Posterior vena cava (tissue), 2 donors: ENCODE measurements at regions of chr3 and their contacts with region 1.

Region 1: DNA sequence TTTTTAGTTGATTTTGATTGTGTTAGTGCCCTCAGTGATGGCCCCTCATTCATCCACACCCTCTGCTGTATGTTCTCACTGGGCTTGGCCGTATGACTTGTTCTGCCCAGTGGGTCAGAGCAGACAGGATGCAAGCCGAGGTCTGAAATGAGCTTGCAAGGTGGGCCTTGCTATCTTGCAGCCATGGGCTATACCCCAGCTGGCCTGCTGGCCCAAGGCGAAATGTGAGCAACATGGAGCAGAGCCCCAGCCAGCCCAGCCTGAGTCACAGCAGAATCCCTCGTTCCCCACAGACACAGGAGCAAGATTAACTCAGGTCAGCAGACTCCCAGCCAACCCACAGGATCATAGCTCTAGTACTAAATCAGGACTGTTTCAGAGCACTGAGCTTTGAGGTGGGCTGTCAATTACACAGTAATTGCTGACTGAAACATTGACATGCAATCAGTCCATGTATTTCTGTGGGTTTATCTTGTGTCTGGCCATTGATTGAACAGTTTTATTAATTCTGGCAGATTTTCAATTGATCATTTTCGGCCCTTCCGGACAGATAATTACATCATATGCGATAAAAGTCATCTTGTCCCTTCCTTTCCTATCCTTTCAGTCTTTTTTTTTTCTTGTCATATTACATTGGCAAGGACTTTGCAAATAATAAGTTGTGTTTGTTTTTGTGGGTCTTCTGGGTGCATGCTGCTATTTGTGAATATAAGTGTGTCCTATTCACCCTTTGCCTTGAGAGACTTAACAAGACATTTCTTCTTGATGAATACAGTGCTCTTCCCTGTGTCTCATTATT is 27.1 kb downstream of the KLF15 start:
- DNase-seq: peak; percentile 53

Region 2: GRCh38 chr3:126212602-126213378 is 117.3 kb before region 1 on chr3:
- intact Hi-C with region 1: no loop called
- DNase-seq: peak; percentile 84

Region 3: GRCh38 chr3:126389112-126389793 is 59.1 kb after region 1 on chr3:
- intact Hi-C with region 1: no loop called
- DNase-seq: peak; percentile 98

Region 4: GRCh38 chr3:126850370-126851085 is 520.4 kb after region 1 on chr3:
- intact Hi-C with region 1: loop called in 1 of 2 experiments (anchors 5 kb)
- DNase-seq: no peak